ENCODE measurements at regions of chr11 and their contacts with region 1.

Region 1: DNA sequence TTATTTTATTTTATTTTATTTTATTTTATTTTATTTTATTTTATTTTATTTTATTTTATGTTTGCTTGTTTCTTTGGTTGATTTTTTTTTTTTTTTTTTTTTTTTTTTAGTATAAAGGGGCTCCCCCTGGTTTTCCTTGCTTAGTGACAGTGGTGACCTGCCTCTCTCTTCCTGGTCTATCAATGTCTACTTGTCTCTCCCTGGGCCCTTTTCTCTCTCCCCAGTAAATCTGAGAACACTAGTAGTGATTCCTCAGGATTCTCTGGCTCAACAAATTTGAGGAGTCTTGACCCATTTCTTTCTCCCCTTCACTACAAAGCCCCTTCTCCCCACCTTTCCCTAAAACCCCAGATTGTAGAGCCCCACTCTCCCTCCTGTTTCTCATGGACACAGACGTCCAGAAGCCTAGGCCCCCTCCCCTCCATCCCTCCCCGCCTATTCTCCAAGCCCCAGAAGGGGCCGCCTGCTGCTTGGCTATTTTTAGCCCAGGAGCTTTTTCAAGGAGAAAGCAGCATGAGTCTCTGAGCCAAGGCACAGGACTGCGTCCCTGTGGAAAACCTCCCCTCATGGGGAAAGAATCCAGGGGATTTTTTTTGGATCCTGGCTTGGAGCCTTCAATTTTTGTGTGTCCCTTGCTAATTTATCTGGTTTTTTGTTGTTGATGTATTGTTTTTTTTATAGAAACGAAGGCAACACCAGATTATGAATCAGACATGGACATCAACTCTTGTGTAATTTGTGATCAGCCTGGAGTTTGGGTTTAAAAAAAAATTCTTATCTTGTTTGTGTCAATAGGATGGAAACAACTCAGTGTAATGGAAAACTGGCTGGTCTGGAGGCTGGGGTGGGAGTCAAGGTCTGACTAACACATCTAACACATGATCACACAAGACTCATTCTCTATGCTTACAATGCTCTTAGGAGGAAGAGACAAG is 17.5 kb upstream of the ACCSL start:
- DNase-seq: peak; percentile 77 to 93 (median 86)
- H3K4me3 ChIP-seq: no peak overlapping the region
- H3K27ac ChIP-seq: peak overlapping the region; percentile 76 to 93 (median 82)
- H3K4me1 ChIP-seq: peaks cover 13 to 40% of the 10 kb centered on the region in 2 donors
- H3K27me3 ChIP-seq: no peaks in the 10 kb centered on the region
- CTCF ChIP-seq: no peak
- POLR2A ChIP-seq: no peak

Region 2: GRCh38 chr11:43987384-43988039 is 42.7 kb before region 1 on chr11:
- intact Hi-C with region 1: loop called in 1 of 2 experiments (anchors 5 kb)
- DNase-seq: peak; percentile 89 to 98 (median 97)
- H3K4me3 ChIP-seq: peak overlapping the region in 1 of 4 donors; percentile 9
- H3K27ac ChIP-seq: peak overlapping the region in 4 of 5 donors; percentile 49 to 86 (median 70)
- H3K4me1 ChIP-seq: peaks cover 36 to 70% of the 10 kb centered on the region in 2 donors
- H3K27me3 ChIP-seq: no peaks in the 10 kb centered on the region
- CTCF ChIP-seq: no peak
- POLR2A ChIP-seq: peak in 1 of 2 donors; percentile 32

Region 3: DNA sequence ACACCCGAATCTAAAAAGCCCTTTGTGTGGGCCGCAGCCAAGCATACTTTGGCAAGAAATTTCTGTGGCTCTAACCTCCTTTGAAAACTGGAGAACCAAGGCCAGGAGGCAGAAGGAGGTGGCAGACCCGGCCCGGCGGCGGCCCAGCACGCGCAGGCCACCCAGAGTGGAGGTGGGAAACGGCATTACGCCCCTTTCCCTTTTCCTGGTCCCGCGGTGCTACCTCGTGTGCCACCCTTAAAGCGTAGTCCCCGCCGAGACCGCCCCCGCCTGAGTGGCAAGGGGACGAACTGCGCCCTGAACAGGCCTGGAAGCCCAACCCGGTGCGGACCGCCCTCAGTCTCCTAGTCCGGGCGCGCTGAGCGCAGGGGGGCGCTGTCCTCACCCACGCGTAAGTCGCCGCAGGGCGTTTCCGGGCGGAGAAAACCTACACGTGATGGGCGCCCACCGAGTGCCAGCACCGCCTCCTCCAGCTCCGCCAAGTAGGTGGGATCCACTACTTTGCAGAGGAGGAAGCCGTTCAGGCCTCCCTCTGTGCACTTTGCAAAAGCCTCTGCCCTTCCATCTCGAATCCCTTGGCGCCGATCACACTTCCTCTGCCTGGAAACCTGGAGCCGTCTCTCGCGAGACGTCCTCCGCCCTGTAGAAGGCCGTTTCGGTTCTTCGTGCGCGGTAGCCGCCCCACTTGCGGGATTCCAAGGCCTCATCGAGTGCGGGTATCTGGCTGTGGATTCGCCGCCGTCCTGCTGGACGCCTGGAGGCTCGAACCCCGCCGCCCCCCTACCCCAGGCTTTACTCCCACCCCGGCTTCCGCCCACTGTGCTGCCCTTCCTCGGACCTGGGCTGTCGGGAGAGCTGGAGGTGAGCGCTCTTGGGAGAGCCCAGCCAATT is 35.8 kb after region 1 on chr11 and contains the start of gene ACCS:
- intact Hi-C with region 1: no loop called
- DNase-seq: peak; percentile 94 to 98 (median 97)
- H3K4me3 ChIP-seq: peak within 1 kb of the TSS; percentile 7 to 84 (median 71)
- H3K27ac ChIP-seq: peak within 1 kb of the TSS; percentile 79 to 94 (median 89)
- H3K4me1 ChIP-seq: peaks cover 6 to 27% of the 10 kb centered on the region in 2 donors
- H3K27me3 ChIP-seq: no peaks in the 10 kb centered on the region
- CTCF ChIP-seq: peak; percentile 72 to 87 (median 83)
- POLR2A ChIP-seq: peak; percentile 63 to 85
- total RNA-seq, gene ACCS: 12.3 to 64.5 (median 37.3) TPM

Measured in adrenal gland (tissue), 19 donors.